Esophagus squamous epithelium (tissue), 5 donors: ENCODE measurements at regions of chr1 and their contacts with region 1.

Region 1: GRCh38 chr1:119008483-119009311 is 20.6 kb upstream of the TBX15 start:
- DNase-seq: no peak
- H3K4me3 ChIP-seq: peak overlapping the region; percentile 4 to 57 (median 31)
- H3K27ac ChIP-seq: no peak overlapping the region
- H3K4me1 ChIP-seq: peaks cover 17 to 34% (median 25%) of the 10 kb centered on the region in 3 donors
- H3K27me3 ChIP-seq: peaks cover 10 to 63% (median 34%) of the 10 kb centered on the region in 4 donors
- CTCF ChIP-seq: peak; percentile 29 to 71 (median 54)
- POLR2A ChIP-seq: no peak

Region 2: DNA sequence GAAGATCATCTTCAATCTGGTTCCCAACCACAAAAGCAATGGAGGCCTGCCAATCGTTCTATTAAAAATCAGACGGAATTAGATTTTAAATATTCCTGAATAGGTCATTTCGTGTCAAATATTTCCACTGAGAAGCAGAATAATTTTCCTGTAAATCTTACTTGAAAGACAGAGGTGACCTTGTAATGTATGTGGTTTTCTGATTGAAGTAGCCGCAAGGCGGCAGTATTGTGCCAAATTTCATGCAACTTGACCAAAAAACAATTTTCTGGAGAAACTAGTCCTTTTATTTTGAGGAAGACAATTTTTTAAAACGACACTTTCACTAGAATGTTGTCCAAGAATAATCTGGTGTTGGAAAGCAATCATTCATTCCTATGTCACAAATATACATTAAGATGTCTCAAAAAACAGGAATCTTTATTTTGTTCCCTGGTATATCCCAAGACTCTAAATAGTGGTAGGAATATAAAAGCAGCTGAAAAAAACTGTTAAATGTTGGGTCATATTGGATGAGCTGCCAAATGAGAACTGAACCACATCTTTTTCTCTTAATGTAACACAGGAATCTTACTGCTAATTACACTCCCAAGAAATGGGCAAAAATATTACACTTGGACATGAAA is 857.3 kb before region 1 on chr1:
- intact Hi-C with region 1: loop called (anchors 5 kb)
- DNase-seq: no peak
- H3K4me3 ChIP-seq: no peak overlapping the region
- H3K27ac ChIP-seq: no peak overlapping the region
- H3K4me1 ChIP-seq: no peaks in the 10 kb centered on the region
- H3K27me3 ChIP-seq: no peaks in the 10 kb centered on the region
- CTCF ChIP-seq: peak; percentile 39 to 77 (median 55)
- POLR2A ChIP-seq: no peak

Region 3: GRCh38 chr1:118744420-118744819 is 264.3 kb before region 1 on chr1:
- intact Hi-C with region 1: no loop called
- DNase-seq: no peak
- H3K4me3 ChIP-seq: no peak overlapping the region
- H3K27ac ChIP-seq: no peak overlapping the region
- H3K4me1 ChIP-seq: no peaks in the 10 kb centered on the region
- H3K27me3 ChIP-seq: no peaks in the 10 kb centered on the region
- CTCF ChIP-seq: no peak
- POLR2A ChIP-seq: no peak